ENCODE measurements at regions of chr3 and their contacts with region 1.

Region 1: GRCh38 chr3:87792534-87793336 is 266.1 kb downstream of the CGGBP1 start:
- DNase-seq: peak; percentile 46 to 69 (median 52)
- ATAC-seq: peak; percentile 74
- H3K4me3 ChIP-seq: peak within 1 kb of the TSS; percentile 76
- H3K27ac ChIP-seq: peak within 1 kb of the TSS; percentile 84
- H3K4me1 ChIP-seq: peaks cover 5 to 15% of the 10 kb centered on the region in 2 experiments; a peak in 3 of 5 replicates
- H3K27me3 ChIP-seq: no peaks in the 10 kb centered on the region
- CTCF ChIP-seq: peak; percentile 36 to 74 (median 50); a peak in 5 of 6 replicates
- EP300 ChIP-seq: no peak
- POLR2A ChIP-seq: no peak; the same call in 1 of the 2 replicates
- RAD21 ChIP-seq: peak; percentile 27 to 44; a peak in 2 of 4 replicates

Region 2: GRCh38 chr3:87553058-87553457 is 239.7 kb before region 1 on chr3:
- CTCF ChIA-PET with region 1: no interaction called
- POLR2A ChIA-PET with region 1: no interaction called
- in situ Hi-C with region 1: no loop called
- intact Hi-C with region 1: loop called (anchors 10 kb)
- DNase-seq: no peak
- ATAC-seq: no peak
- H3K4me3 ChIP-seq: no peak overlapping the region
- H3K27ac ChIP-seq: no peak overlapping the region
- H3K4me1 ChIP-seq: no peaks in the 10 kb centered on the region
- H3K27me3 ChIP-seq: no peaks in the 10 kb centered on the region
- CTCF ChIP-seq: no peak
- EP300 ChIP-seq: no peak
- POLR2A ChIP-seq: no peak
- RAD21 ChIP-seq: no peak

Region 3: GRCh38 chr3:88149509-88150362 is 357.0 kb after region 1 on chr3 and contains the start of gene C3orf38:
- CTCF ChIA-PET with region 1: no interaction called
- POLR2A ChIA-PET with region 1: interaction called, 7 read pairs
- in situ Hi-C with region 1: no loop called
- intact Hi-C with region 1: loop called (anchors 10 kb)
- DNase-seq: peak; percentile 69 to 90 (median 76)
- ATAC-seq: peak; percentile 91
- H3K4me3 ChIP-seq: peak within 1 kb of the TSS; percentile 93
- H3K27ac ChIP-seq: peak within 1 kb of the TSS; percentile 99
- H3K4me1 ChIP-seq: peaks cover 5 to 8% of the 10 kb centered on the region in 2 experiments; a peak in 2 of 5 replicates
- H3K27me3 ChIP-seq: no peaks in the 10 kb centered on the region
- CTCF ChIP-seq: no peak
- EP300 ChIP-seq: no peak
- POLR2A ChIP-seq: peak; percentile 83
- RAD21 ChIP-seq: no peak
- polyA plus RNA-seq, gene C3orf38: 15.1 to 20.6 TPM